GM12878 (cell line): ENCODE measurements at regions of chr22 and their contacts with region 1.

Region 1: DNA sequence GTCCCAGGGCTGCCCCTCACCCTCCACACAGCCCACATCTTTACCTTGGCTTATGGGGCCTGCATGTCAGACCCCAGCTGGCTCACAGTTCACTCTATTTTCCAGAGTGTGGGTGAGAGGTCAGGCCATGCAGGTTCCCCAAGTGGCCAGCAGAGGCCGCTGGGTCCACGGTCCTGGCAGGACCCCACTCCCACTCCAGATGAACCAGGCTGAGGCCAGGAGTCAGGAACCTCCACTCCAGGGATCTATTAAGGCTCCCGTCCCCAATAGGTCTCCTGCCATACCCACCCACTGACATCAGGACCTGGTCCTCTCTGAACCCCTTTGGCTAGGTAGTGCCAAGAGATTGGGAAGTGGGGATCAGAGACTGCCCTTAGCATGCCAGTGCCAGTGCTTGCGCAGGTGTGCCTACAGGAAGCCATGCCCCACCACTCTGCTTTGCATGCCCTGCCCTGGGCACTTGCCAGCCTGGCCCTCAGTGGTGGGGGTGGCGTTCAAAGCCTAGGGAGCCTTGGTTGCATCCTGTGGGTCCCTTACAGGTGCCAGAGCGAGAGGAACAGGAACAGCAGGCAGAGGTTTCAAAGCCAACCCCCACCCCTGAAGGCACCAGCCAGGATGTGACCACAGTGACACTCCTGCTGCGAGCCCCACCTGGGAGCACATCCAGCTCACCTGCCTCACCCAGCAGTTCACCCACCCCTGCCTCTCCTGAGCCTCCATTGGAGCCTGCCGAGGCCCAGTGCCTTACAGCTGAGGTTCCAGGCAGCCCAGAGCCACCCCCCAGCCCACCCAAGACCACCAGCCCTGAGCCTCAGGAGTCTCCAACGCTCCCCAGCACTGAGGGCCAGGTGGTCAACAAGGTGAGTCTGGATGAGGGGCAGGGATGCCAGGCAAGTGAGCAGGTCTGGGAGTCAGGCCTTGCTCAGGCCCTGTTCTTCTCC is 8.3 kb downstream of the SMTN start:
- DNase-seq: no peak
- ATAC-seq: peak; percentile 15; the same call in 1 of the 3 replicates
- H3K4me3 ChIP-seq: no peak overlapping the region
- H3K27ac ChIP-seq: no peak overlapping the region
- H3K4me1 ChIP-seq: peaks cover 3% of the 10 kb centered on the region
- H3K27me3 ChIP-seq: no peaks in the 10 kb centered on the region
- CTCF ChIP-seq: peak; percentile 81 to 89 (median 87)
- EP300 ChIP-seq: no peak
- POLR2A ChIP-seq: no peak
- RAD21 ChIP-seq: peak; percentile 69

Region 2: GRCh38 chr22:31148953-31149627 is 59.7 kb after region 1 on chr22:
- CTCF ChIA-PET with region 1: interaction called, 3 read pairs
- POLR2A ChIA-PET with region 1: no interaction called
- RAD21 ChIA-PET with region 1: no interaction called
- SMC1A ChIA-PET with region 1: no interaction called
- in situ Hi-C with region 1: no loop called
- intact Hi-C with region 1: loop called (anchors 1 kb)
- DNase-seq: no peak
- ATAC-seq: peak; percentile 93
- H3K4me3 ChIP-seq: no peak overlapping the region
- H3K27ac ChIP-seq: no peak overlapping the region
- H3K4me1 ChIP-seq: no peaks in the 10 kb centered on the region
- H3K27me3 ChIP-seq: no peaks in the 10 kb centered on the region
- CTCF ChIP-seq: peak; percentile 87 to 94 (median 90)
- EP300 ChIP-seq: no peak
- POLR2A ChIP-seq: no peak
- RAD21 ChIP-seq: peak; percentile 81